Heart right ventricle (tissue), 16 donors: ENCODE measurements at regions of chr5 and their contacts with region 1.

Region 1: DNA sequence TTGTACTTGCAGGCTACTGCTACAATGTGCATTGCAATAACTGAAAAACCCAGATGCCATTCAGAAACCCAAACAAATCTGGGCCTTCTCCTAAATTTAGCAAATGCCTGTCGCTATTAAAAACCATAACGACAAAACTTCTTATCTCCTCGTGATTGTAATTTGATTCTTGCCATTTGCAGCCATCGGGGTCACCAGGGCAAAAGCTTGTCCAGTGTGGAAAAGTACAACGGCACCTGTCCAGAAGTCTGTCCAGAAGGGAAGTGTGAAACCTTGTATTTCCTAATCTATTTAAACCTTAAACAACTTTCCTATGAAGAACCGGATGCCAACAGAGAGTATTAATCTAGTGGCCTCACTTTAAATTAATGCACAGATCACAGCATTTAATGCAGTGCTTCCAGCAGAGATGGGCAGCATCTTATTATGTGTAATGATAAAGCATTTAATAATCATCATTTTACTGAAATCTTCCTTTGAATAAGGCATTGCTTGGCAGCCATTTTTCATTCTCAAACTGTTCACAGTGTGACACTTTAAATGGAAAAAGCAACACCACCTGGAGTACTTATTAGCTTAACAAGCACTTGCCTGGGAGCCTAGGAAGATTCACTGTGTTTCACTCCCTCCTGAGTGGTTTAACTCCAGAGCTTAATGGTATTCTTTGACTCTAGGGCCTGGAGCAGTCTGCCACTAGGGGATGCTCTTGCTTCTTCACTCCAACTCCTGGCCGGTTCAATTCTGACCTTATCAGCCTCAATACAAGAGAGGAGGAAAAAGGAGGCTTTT is 4.9 kb upstream of the C7 start:
- DNase-seq: peak; percentile 34 to 78
- ATAC-seq: peak; percentile 93 to 96 (median 94)
- H3K4me3 ChIP-seq: no peak overlapping the region
- H3K27ac ChIP-seq: peak overlapping the region in 9 of 10 donors; percentile 6 to 67 (median 57)
- H3K4me1 ChIP-seq: peaks cover 0 to 24% (median 17%) of the 10 kb centered on the region in 9 donors
- H3K27me3 ChIP-seq: no peaks in the 10 kb centered on the region
- CTCF ChIP-seq: peak; percentile 91 to 98 (median 94)

Region 2: DNA sequence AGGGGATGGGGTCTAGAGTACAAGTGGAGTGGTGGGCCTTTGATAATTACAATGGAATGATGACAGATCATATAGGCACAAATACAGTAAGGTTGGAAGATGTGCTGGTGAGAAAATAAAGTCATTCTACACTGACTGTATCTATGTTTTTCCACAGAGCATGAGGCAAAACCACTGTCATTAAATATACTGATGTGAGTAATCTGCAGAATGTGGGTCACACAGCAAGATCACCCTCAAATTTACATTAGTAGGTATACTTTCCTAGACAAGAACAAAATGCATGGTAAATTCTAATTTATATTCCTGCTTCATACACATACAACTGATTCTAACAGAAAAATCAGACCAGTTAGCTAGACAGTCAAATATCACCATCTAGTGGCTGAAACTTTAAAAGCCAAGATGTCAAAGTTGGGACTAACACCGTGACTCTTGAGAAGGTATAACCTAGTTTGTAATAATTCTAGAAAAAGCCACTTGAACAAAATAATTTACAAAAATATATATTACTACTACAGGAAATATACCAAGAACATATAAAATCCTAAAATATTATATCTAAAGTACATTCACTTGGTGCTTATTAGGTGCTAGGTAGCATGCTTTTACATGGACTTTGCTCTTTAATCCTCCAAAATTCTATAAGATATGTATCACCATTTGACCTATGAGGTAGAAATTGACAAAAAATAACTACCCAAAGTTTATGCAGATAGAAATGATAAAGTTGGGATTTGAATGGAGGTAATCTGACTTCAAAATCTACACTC is 168.1 kb before region 1 on chr5:
- intact Hi-C with region 1: no loop called
- DNase-seq: no peak
- ATAC-seq: peak in 5 of 8 donors; percentile 64 to 75 (median 71)
- H3K4me3 ChIP-seq: no peak overlapping the region
- H3K27ac ChIP-seq: no peak overlapping the region
- H3K4me1 ChIP-seq: peaks cover 6 to 37% (median 31%) of the 10 kb centered on the region in 9 donors
- H3K27me3 ChIP-seq: no peaks in the 10 kb centered on the region
- CTCF ChIP-seq: peak; percentile 61 to 88 (median 78)

Region 3: DNA sequence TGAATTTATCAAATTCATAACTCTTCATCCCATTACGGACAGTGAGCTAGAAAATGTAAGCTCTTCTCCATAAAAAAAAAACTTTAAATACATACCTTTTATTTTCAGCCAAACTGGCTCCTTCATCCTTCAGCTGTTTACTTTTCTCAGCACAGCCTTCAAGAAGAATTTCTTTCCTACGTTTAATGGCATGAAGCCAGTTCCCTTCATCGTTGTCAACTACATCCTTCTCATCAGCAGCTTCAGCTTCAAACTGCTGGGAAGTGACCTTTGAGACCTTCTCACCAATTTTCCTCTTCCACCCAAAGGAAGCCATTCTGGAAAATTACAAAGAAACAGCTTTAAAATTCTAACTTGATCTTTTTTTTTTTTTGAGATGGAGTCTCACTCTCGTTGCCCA is 157.7 kb before region 1 on chr5:
- intact Hi-C with region 1: no loop called
- DNase-seq: no peak
- ATAC-seq: no peak
- H3K4me3 ChIP-seq: no peak overlapping the region
- H3K27ac ChIP-seq: no peak overlapping the region
- H3K4me1 ChIP-seq: peaks cover 0 to 17% (median 3%) of the 10 kb centered on the region in 9 donors
- H3K27me3 ChIP-seq: no peaks in the 10 kb centered on the region
- CTCF ChIP-seq: no peak

Region 4: GRCh38 chr5:41083306-41083705 is 178.9 kb after region 1 on chr5:
- intact Hi-C with region 1: no loop called
- DNase-seq: no peak
- ATAC-seq: no peak
- H3K4me3 ChIP-seq: no peak overlapping the region
- H3K27ac ChIP-seq: no peak overlapping the region
- H3K4me1 ChIP-seq: peaks cover 0 to 9% (median 0%) of the 10 kb centered on the region in 9 donors
- H3K27me3 ChIP-seq: no peaks in the 10 kb centered on the region
- CTCF ChIP-seq: no peak

Region 5: GRCh38 chr5:41115281-41115680 is 210.9 kb after region 1 on chr5:
- intact Hi-C with region 1: loop called in 2 of 10 experiments (anchors 5 to 10 kb)
- DNase-seq: no peak
- ATAC-seq: no peak
- H3K4me3 ChIP-seq: no peak overlapping the region
- H3K27ac ChIP-seq: no peak overlapping the region
- H3K4me1 ChIP-seq: peaks cover 0 to 3% (median 0%) of the 10 kb centered on the region in 9 donors
- H3K27me3 ChIP-seq: no peaks in the 10 kb centered on the region
- CTCF ChIP-seq: no peak

Region 6: GRCh38 chr5:41264019-41264418 is 359.6 kb after region 1 on chr5:
- intact Hi-C with region 1: loop called in 2 of 10 experiments (anchors 5 to 10 kb)
- DNase-seq: no peak
- ATAC-seq: peak; percentile 62 to 84 (median 81)
- H3K4me3 ChIP-seq: no peak overlapping the region
- H3K27ac ChIP-seq: peak overlapping the region in 8 of 10 donors; percentile 27 to 71 (median 50)
- H3K4me1 ChIP-seq: peaks cover 5 to 30% (median 15%) of the 10 kb centered on the region in 9 donors
- H3K27me3 ChIP-seq: no peaks in the 10 kb centered on the region
- CTCF ChIP-seq: no peak

Region 7: DNA sequence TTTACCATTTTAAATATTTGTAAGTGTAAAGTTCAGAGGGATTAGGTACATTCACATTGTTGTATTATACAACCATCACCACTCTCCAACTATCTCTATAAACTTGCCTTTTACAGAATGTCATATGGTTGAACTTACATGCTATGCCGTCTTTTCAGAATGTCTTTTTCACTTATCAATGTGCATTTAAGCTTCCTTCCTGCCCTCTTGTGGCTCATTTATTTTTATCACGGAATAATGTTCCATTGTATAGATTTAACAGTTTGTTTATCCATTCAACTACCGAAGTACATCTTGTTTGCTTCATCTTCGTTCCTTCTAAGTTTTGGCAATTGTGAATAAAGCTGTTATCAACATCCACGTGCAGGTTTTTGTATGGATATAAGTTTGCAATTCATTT is 442.2 kb after region 1 on chr5:
- intact Hi-C with region 1: loop called in 2 of 10 experiments (anchors 5 to 10 kb)
- DNase-seq: no peak
- ATAC-seq: no peak
- H3K4me3 ChIP-seq: no peak overlapping the region
- H3K27ac ChIP-seq: no peak overlapping the region
- H3K4me1 ChIP-seq: peaks cover 0 to 59% (median 18%) of the 10 kb centered on the region in 9 donors
- H3K27me3 ChIP-seq: no peaks in the 10 kb centered on the region
- CTCF ChIP-seq: no peak

Region 8: GRCh38 chr5:41539454-41539853 is 635.1 kb after region 1 on chr5:
- intact Hi-C with region 1: loop called in 3 of 10 experiments (anchors 10 kb)
- DNase-seq: no peak
- ATAC-seq: peak in 6 of 8 donors; percentile 58 to 78 (median 76)
- H3K4me3 ChIP-seq: no peak overlapping the region
- H3K27ac ChIP-seq: no peak overlapping the region
- H3K4me1 ChIP-seq: peaks cover 0 to 17% (median 0%) of the 10 kb centered on the region in 9 donors
- H3K27me3 ChIP-seq: no peaks in the 10 kb centered on the region
- CTCF ChIP-seq: peak in 3 of 9 donors; percentile 41 to 44 (median 44)

Region 9: DNA sequence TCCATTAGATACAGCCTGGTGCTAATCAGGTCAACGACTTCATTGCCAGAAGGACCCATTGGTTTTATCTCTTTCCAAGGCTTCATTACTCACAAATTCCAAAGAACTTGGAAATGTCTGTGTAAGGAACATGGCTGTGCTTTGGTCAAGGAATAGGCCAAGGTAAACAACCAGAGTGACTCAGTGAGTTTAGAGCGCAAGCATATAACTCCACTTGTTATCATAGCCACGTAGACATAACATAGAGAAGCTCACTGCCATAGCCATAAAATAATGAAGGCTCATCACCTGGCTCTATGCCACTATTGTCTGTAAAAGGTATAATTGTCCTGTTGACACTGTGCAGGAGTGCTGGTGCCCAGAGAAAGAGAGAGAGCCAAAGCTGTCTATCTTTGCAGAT is 745.3 kb after region 1 on chr5:
- intact Hi-C with region 1: loop called in 3 of 10 experiments (anchors 5 to 10 kb)
- DNase-seq: no peak
- ATAC-seq: peak in 1 of 8 donors; percentile 74
- H3K4me3 ChIP-seq: no peak overlapping the region
- H3K27ac ChIP-seq: no peak overlapping the region
- H3K4me1 ChIP-seq: peaks cover 0 to 13% (median 0%) of the 10 kb centered on the region in 9 donors
- H3K27me3 ChIP-seq: no peaks in the 10 kb centered on the region
- CTCF ChIP-seq: no peak